ENCODE measurements at regions of chr1 and their contacts with region 1.

Region 1: GRCh38 chr1:22416555-22417454 is 34.8 kb upstream of the ZBTB40 start:
- DNase-seq: peak; percentile 61 to 97 (median 80)

Region 2: GRCh38 chr1:22105611-22106207 is 311.1 kb before region 1 on chr1:
- intact Hi-C with region 1: loop called (anchors 2 kb)
- DNase-seq: no peak

Region 3: DNA sequence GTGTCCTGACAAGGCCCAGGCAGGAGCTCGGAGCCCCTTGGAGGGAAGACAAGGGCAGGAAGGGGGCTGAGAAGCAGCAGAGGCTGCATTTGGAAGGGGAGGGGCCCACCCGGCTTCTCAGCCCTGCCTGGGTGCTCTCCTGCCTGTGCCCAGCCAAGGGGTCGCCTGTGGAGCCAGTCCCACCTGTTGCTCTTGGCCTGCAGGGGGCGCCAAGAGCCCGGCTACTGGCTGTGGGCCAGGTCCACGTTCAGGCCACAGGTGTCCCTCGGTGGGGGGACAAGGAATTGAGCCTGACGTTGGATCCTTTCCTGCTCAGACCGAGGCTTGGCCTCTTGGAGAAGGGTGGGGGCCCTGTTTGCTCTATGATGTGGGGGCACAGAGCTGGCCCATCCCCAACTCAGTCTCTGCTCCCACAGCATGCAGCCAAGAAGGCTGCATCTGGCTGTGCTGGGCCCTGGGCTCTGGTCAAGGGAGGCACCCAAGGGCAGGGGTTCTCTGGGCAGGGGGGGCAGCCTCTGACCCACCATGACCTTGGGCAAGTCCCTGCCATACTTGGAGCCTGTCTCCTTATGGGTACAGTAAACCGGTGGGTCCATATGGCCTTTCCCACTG is 284.8 kb before region 1 on chr1:
- intact Hi-C with region 1: loop called (anchors 1 kb)
- DNase-seq: peak in 3 of 10 donors; percentile 63 to 80 (median 72)

Region 4: GRCh38 chr1:22641906-22642636 is 225.3 kb after region 1 on chr1:
- intact Hi-C with region 1: loop called (anchors 1 kb)
- DNase-seq: peak; percentile 70 to 97 (median 86)